Activated CD4-positive, alpha-beta T cell treated with anti-CD3 and anti-CD28 coated beads for 36 hours (primary cell): ENCODE measurements at regions of chr10 and their contacts with region 1.

Region 1: DNA sequence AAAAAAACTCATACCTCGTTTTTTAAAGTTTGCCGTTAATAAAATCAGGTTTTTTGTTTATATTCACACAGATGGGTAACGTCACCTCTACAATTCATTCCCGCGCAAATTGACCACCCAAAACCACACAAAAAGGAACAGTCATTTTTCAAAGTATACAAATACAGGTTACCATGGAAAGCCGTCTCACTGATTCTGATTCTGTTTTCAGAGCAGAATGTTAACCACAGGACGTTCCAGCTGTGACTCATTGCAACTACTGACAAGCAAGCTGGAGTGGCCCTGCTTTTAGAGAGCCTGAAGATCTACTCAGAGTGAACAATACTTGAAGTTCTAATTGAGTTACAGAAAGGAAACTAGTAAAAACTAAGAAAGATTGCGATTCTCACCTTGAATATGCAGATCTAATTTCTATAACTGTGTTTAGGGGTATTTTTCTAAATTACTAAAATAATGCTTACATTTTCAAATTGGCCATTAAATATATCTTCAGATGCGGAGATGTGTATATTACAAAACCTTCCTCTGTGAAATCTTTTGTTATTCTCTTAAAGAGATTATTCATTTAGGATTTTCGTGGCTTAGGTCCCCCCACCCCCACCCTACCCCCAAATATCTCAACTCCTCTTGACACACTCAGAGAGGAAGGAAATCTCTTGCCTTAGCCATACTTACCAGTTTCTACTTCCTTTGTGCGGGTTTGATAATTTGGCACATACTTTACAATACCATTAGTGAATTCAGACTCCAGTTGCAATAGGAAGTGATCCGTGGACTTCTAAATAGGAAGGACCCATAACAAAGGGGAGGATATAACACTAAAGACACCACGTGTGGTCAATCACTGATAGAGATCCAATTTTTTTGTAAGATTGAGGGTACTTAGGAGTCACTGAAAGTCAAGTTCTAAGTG is 106.0 kb downstream of the CUBN start:
- DNase-seq: peak; percentile 89
- ATAC-seq: peak; percentile 66
- H3K4me3 Mint-ChIP-seq: peak overlapping the region; percentile 50
- H3K27ac Mint-ChIP-seq: peak overlapping the region; percentile 95
- H3K4me1 Mint-ChIP-seq: peaks cover 62% of the 10 kb centered on the region
- H3K27me3 Mint-ChIP-seq: no peaks in the 10 kb centered on the region

Region 2: GRCh38 chr10:16742165-16742960 is 281.3 kb before region 1 on chr10:
- CTCF ChIA-PET with region 1: no interaction called
- POLR2A ChIA-PET with region 1: no interaction called
- intact Hi-C with region 1: no loop called
- DNase-seq: no peak
- ATAC-seq: no peak
- H3K4me3 Mint-ChIP-seq: no peak overlapping the region
- H3K27ac Mint-ChIP-seq: no peak overlapping the region
- H3K4me1 Mint-ChIP-seq: no peaks in the 10 kb centered on the region
- H3K27me3 Mint-ChIP-seq: no peaks in the 10 kb centered on the region

Region 3: GRCh38 chr10:16965740-16966447 is 57.7 kb before region 1 on chr10:
- CTCF ChIA-PET with region 1: no interaction called
- POLR2A ChIA-PET with region 1: no interaction called
- intact Hi-C with region 1: loop called (anchors 1 to 2 kb)
- DNase-seq: no peak
- ATAC-seq: no peak
- H3K4me3 Mint-ChIP-seq: no peak overlapping the region
- H3K27ac Mint-ChIP-seq: no peak overlapping the region
- H3K4me1 Mint-ChIP-seq: peaks cover 24% of the 10 kb centered on the region
- H3K27me3 Mint-ChIP-seq: no peaks in the 10 kb centered on the region

Region 4: DNA sequence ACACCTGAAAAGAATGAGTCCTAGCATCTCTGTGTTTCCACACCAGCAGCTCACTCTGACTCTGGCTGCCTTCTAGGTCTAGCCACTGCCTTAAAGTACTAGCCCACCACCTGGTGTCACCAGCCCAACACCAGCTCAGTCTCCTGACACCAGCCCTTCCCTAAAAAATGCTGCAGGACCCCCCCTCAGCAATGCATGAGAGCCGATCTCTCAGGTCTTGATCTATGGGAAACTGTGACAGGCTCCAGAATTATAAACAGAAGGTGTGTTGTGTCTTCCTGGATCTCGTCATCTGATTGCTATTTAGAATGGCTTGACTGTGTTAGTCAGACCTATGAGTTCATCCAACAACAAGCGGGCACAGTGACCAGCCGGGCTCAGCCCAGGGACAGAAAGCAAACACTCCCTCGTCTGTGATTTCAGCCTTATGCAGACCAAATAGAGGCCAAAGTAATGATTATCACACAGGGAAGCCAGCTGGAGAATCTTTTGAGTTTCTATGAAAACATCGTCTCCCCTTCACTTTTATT is 39.4 kb after region 1 on chr10:
- CTCF ChIA-PET with region 1: no interaction called
- POLR2A ChIA-PET with region 1: no interaction called
- intact Hi-C with region 1: loop called in 1 of 2 experiments (anchors 1 kb)
- DNase-seq: no peak
- ATAC-seq: peak; percentile 17
- H3K4me3 Mint-ChIP-seq: no peak overlapping the region
- H3K27ac Mint-ChIP-seq: peak overlapping the region; percentile 17
- H3K4me1 Mint-ChIP-seq: peaks cover 49% of the 10 kb centered on the region
- H3K27me3 Mint-ChIP-seq: no peaks in the 10 kb centered on the region

Region 5: GRCh38 chr10:17200912-17201793 is 177.5 kb after region 1 on chr10 and contains the start of gene TRDMT1:
- CTCF ChIA-PET with region 1: no interaction called
- POLR2A ChIA-PET with region 1: interaction called, 9 read pairs
- intact Hi-C with region 1: loop called (anchors 1 kb)
- DNase-seq: peak; percentile 85
- ATAC-seq: peak; percentile 91
- H3K4me3 Mint-ChIP-seq: peak within 1 kb of the TSS; percentile 86
- H3K27ac Mint-ChIP-seq: peak within 1 kb of the TSS; percentile 89
- H3K4me1 Mint-ChIP-seq: peaks cover 46% of the 10 kb centered on the region
- H3K27me3 Mint-ChIP-seq: no peaks in the 10 kb centered on the region
- total RNA-seq, gene TRDMT1: 6.6 to 11.6 TPM